Panc1 (cell line): ENCODE measurements at regions of chr2 and their contacts with region 1.

Region 1: GRCh38 chr2:116724550-116724949 is 1089.9 kb upstream of the DDX18 start:
- DNase-seq: no peak
- ATAC-seq: no peak
- H3K4me3 ChIP-seq: no peak overlapping the region
- H3K27ac ChIP-seq: no peak overlapping the region
- H3K4me1 ChIP-seq: no peaks in the 10 kb centered on the region
- H3K27me3 ChIP-seq: no peaks in the 10 kb centered on the region
- CTCF ChIP-seq: no peak

Region 2: DNA sequence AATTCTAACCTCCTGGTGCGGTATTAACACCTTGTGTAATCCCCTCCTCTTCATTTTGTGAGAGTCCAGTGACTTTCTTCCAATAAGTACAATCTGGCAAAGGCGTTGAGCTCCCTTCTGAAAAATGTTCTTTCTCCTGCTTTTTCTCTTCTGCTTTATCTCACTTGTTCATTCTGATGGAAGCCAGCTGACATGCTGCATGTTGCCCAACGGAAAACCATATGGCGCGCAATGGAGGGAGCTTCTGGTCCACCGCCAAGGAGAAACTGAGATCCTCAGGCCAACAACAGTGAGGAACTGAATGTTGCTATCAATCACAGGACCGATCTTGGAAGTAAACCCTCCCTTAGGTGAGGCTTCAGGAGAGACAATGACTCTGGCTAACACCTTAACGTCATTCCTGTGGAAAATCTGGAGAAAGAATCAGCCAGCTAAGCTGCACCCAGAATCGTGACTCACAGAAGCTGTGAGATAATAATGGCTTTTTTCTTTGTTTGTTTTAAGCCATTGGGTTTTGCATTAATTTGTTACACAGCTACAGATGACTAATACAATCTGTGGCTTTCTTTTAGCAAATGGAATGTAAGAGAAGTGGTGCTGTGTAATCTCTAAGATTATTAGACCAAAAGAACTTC is 233.9 kb before region 1 on chr2:
- CTCF ChIA-PET with region 1: interaction called, 10 read pairs
- POLR2A ChIA-PET with region 1: no interaction called
- in situ Hi-C with region 1: no loop called
- intact Hi-C with region 1: no loop called
- DNase-seq: no peak
- ATAC-seq: no peak
- H3K4me3 ChIP-seq: no peak overlapping the region
- H3K27ac ChIP-seq: no peak overlapping the region
- H3K4me1 ChIP-seq: no peaks in the 10 kb centered on the region
- H3K27me3 ChIP-seq: no peaks in the 10 kb centered on the region
- CTCF ChIP-seq: no peak

Region 3: DNA sequence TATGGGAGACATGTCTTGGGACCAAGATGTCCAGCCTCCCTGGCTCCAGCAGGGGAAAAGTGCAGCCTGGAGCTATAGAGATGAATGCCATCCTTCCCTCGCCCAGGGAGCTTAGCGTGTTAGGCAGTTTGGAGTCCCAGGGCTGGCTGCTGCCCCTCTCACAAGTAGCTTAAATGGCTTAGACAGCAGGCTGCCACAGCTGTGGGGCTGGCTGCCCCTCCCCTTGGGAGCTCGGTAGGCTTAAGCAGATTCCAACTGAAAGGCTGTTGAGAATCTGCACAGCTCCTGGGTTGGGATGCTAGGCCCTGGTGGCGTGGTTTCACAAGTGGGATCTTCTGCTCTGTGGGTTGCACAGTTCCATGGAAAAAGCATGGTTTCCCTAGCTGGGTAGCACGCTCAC is 149.5 kb after region 1 on chr2:
- CTCF ChIA-PET with region 1: no interaction called
- POLR2A ChIA-PET with region 1: no interaction called
- in situ Hi-C with region 1: no loop called
- intact Hi-C with region 1: no loop called
- DNase-seq: no peak
- ATAC-seq: no peak
- H3K4me3 ChIP-seq: no peak overlapping the region
- H3K27ac ChIP-seq: no peak overlapping the region
- H3K4me1 ChIP-seq: no peaks in the 10 kb centered on the region
- H3K27me3 ChIP-seq: no peaks in the 10 kb centered on the region
- CTCF ChIP-seq: no peak